ENCODE measurements at regions of chr9 and their contacts with region 1.

Region 1: DNA sequence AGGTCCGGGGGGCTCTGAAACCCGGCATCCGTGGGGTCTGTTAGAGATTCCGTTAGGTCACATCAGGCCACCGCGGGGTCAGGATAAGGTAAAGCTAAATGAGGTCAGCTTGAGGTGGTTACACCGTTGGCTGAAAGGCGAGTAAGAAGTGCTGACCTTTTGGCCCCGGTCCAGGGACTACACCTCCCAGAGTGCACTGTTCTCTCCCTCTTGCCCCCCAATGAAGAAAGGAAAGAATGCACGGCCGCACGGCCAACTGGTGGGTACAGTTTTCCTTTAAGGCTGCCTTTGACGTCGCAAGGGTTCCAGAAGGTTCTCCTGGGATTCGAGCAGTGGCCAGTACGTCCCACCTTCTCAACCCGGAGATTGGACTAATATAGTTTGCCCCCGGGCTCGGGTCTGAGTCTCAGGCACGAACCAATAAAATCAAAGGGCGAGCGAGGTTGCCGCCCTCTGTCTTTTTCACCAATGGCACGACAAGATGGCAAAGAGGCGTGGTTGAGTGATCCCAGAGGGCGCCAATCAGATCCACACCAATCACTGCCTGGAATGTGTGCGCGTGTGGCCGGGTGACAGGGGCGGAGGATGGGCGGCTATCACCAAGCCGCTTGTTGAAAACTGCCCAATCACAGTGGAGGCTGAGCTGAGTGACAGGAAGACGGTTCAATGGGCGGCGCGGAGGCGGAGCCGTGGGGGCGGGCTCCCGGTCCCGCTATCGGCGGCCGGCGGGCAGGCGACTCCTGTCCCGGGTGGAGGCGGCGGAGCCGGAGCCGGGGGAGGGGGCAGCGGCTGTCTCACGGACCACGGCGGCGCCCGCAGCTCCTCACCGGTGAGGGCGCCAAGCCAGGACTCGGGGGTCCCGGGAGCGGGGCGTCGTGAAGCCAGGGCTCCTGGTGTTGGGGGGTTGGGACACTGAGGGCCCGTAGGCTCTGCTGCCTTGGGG is at the start of gene DNAJB5:
- DNase-seq: peak; percentile 96
- H3K4me3 Mint-ChIP-seq: peak within 1 kb of the TSS; percentile 94
- H3K27ac Mint-ChIP-seq: peak within 1 kb of the TSS; percentile 98
- H3K4me1 Mint-ChIP-seq: peaks cover 87% of the 10 kb centered on the region
- H3K27me3 Mint-ChIP-seq: no peaks in the 10 kb centered on the region
- total RNA-seq, gene DNAJB5: 5.3 and 6.0 TPM in 2 replicates

Region 2: DNA sequence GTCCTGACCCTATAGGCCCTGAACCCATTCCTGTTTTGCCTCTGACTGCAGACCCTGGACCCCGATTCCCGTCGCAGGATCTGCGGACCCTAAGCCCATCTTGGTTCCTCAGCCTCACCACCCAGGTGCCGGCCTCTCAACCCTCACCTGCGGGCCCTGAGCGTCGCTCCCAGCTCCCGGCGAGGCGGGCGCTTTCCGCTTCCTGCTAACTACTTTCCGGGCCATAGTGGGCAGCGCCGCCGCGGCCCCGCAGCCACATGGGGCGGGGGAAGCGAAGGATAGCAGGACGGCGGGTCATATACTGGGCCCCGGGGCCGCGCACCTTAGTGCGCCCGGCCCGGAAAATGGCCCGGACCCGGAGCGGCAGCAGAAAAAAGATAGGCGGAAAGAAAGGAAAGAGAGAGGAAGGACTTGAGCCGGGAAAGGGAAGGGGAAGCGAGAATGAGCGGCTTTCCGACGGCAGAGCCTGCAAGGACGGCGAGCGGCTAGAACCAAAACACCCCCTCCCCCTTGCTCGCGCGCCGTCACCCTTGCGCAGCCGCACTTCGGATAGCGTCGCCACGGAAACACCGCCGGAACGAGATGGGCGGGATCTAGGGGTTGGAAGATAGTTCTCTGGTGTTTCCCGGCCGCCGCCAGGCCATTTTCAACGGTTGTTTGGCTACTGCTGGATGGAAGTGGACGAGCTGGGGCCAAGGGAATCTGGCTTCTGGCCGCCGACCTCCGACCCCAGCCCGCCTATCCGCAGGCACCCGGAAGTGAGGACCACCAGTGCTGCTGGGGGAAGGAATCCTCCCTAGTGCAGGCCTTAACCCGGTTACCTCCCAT is 862.9 kb before region 1 on chr9 and contains the start of gene DCAF12:
- intact Hi-C with region 1: loop called (anchors 10 kb)
- DNase-seq: peak; percentile 89
- H3K4me3 Mint-ChIP-seq: peak within 1 kb of the TSS; percentile 96
- H3K27ac Mint-ChIP-seq: peak within 1 kb of the TSS; percentile 96
- H3K4me1 Mint-ChIP-seq: peaks cover 43% of the 10 kb centered on the region
- H3K27me3 Mint-ChIP-seq: no peaks in the 10 kb centered on the region
- total RNA-seq, gene DCAF12: 49.7 and 52.8 TPM in 2 replicates

Region 3: DNA sequence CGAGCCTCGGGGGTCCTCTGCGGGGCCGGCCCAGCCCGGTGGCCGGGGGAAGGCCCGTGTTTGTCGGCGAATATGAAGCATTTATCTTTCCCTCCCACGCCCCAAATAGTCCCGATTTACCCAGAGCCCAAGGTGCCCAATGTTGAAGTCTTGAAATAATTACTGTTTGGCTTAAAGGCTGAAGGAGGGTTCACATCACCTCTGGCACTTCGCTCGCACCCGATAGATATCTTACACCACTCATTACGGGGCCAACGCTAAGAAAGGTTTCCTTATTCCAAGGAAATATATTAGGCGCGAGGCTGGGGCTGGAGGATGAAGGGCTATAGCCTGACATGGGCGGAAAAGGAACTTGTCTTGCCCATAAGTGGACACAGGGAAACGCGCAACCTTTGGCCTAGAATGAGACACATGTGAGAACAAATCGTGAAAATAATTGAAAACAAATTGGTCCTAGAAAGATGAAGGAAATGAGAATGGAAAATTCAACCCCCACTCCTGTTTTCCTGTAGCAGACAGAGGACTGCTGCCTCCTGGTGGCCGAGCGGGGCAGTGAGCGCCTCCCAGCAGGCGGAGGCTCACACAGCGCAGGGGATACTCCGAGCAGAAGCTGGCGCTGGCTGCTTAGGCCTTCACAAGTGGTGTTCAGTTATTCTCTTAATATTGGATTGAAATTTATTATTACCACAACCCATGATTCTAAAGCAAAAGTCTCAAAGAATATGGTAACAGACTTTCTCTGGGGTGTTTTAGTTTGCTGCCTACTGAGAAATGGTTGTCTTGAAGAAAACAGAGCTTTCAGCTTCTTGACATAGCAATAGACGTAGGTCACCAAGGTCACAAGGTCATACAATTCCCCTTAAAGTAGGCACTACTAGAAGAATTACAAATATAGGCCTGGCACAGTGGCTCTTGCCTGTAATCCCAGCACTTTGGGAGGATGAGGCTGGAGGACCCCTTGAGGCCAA is 287.2 kb before region 1 on chr9:
- intact Hi-C with region 1: loop called (anchors 2 kb)
- DNase-seq: peak; percentile 66
- H3K4me3 Mint-ChIP-seq: peak overlapping the region; percentile 82
- H3K27ac Mint-ChIP-seq: peak overlapping the region; percentile 68
- H3K4me1 Mint-ChIP-seq: peaks cover 6% of the 10 kb centered on the region
- H3K27me3 Mint-ChIP-seq: peaks cover 29% of the 10 kb centered on the region

Region 4: GRCh38 chr9:35001803-35002502 is 12.7 kb after region 1 on chr9:
- intact Hi-C with region 1: loop called (anchors 1 kb)
- DNase-seq: no peak
- H3K4me3 Mint-ChIP-seq: peak overlapping the region; percentile 43
- H3K27ac Mint-ChIP-seq: peak overlapping the region; percentile 73
- H3K4me1 Mint-ChIP-seq: peaks cover 39% of the 10 kb centered on the region
- H3K27me3 Mint-ChIP-seq: no peaks in the 10 kb centered on the region

Region 5: DNA sequence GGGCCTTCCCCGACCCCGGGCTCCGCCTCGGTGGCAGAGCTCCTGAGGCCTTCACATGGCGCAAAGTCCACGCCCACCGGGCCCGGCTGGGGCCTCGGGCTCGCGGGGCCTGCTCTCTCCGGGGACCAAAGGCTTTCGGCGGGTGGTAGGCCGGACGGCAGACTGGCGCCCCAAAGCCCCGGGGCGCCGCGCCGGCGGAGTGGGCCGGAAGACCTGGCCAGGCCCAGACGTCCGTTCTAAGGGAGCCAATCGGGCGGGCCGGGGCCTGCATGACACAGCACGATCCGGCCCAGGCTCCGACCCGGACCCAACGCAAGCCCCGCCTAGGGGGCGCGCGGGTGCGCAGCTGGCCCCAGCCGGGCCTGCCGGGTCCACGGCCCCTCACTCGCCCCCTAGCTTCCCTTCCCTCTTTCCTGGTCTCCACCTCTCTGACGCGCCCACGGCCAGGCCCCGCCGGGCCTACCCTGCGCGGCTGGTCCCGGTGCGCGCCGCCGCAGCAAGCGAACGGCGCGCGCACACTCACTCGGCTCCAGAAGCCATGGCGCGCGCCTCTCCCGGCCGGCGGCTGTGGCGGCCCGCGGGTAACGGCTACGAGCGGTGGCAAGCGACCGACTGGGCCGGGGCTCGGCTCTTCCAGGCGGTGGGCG is 82.7 kb after region 1 on chr9:
- intact Hi-C with region 1: loop called (anchors 1 kb)
- DNase-seq: peak; percentile 72
- H3K4me3 Mint-ChIP-seq: peak overlapping the region; percentile 95
- H3K27ac Mint-ChIP-seq: peak overlapping the region; percentile 92
- H3K4me1 Mint-ChIP-seq: peaks cover 55% of the 10 kb centered on the region
- H3K27me3 Mint-ChIP-seq: no peaks in the 10 kb centered on the region

Region 6: DNA sequence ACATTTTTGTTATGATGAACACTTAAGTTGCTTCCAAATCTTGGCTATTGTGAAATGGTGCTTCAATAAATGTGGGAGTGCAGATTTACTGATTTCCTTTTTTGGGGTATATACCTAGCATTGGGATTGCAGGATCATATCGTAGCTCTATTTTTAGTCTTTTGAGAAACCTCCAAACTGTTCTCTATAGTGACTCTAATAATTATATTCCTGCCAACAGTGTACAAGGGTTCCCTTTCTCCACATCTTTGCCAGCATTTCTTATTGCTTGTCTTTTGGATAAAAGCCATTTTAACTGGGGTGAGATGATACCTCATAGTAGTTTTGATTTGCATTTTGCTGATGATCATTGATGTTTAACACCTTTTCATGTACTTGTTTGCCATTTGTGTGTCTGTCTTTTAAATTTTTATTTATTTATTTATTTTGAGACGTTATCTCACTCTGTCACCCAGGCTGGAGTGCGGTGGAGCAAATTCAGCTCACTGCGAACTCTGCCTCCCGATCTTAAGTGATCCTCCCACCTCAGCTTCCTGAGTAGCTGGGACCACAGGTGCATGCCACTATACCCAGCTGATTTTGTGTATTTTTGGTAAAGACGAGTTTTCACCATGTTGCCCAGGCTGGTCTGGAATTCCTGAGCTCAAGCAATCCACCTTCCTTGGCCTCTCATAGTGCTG is 231.5 kb after region 1 on chr9:
- intact Hi-C with region 1: no loop called
- DNase-seq: no peak
- H3K4me3 Mint-ChIP-seq: no peak overlapping the region
- H3K27ac Mint-ChIP-seq: no peak overlapping the region
- H3K4me1 Mint-ChIP-seq: no peaks in the 10 kb centered on the region
- H3K27me3 Mint-ChIP-seq: no peaks in the 10 kb centered on the region

Region 7: DNA sequence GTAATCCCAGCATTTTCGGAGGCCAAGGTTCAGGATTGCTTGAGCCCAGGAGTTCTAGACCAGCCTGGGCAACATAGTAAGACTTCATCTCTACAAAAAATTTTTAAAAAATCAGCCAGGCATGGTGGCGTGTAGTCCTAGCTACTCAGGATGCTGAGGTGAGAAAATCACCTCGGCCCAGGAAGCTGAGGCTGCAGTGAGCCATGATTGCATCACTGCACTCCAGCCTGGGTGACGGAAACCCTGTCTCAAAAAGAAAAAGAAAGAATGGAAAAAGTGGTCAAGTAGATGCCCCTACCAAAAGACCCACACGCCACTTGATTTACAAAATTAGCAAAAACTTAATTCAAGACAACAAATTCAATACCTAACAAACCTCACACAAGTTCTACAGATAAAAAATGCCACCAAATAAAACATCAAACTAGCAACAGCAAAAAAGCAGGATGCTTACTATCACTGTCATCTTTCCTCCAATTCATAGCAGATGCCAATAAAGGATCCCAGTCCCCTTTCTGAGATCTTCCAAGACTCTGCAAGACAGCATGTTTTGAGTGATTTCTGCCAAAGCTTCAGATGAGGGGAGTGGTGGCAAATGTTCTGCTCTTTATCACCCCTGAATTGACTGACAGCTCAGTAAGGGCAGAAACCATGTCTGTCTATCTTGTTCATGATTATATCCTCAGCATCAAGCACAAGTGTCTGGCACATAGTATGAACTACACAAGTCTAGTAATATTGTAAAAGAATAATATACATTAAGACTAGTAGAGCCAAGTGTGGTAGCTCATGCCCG is 581.6 kb after region 1 on chr9:
- intact Hi-C with region 1: loop called (anchors 2 kb)
- DNase-seq: peak; percentile 40
- H3K4me3 Mint-ChIP-seq: peak overlapping the region; percentile 28
- H3K27ac Mint-ChIP-seq: peak overlapping the region; percentile 87
- H3K4me1 Mint-ChIP-seq: peaks cover 39% of the 10 kb centered on the region
- H3K27me3 Mint-ChIP-seq: peaks cover 2% of the 10 kb centered on the region

Region 8: DNA sequence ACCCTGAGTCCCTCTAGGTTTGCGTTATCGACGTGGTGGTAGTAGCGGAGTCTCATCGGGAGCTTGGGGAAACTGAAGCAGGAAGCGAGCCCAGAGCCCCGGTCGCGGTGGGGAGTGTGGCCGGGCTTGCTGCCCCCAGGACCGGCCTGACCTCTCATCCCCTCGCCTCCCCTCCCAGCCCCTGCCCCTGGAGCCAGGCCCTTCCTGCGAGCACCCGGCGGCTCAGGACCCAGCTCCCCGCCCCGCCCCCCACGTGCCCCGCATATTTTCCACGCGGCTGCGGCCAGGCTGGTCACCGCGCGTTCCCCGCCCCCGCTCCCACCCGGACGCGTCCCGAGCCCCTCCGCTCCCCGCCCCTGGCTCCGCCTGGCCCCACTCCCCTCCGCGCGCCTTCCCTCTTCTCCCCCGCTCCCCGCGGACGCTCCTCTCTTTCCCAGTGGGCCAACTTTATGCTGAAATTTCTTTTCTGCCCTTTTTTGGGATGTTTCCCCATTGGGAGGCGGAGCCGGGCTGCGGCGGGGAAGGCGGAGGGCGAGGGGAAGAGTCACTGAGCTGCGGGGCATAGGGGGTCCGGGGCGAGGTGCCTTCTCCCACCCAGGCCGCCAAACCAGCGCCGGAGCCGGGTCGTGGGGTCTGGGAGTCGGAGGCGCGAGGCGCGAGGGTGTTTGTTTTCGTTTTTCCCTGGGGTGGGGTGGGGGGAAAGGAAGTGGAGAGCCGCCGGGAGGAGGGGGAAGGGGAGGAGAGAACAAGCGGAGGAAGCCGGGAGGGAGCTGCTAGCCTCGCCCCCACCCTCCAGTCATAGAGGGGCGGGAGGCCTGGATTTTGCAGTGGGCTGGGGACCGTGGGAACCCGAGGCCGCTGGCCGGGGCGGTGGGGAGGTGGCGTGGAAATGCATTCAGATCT is 701.4 kb after region 1 on chr9:
- intact Hi-C with region 1: no loop called
- DNase-seq: peak; percentile 9
- H3K4me3 Mint-ChIP-seq: peak overlapping the region; percentile 84
- H3K27ac Mint-ChIP-seq: peak overlapping the region; percentile 55
- H3K4me1 Mint-ChIP-seq: peaks cover 26% of the 10 kb centered on the region
- H3K27me3 Mint-ChIP-seq: peaks cover 2% of the 10 kb centered on the region